ENCODE measurements at regions of chr20 and their contacts with region 1.

Region 1: GRCh38 chr20:330233-331149 is 5.1 kb downstream of the SOX12 start:
- DNase-seq: peak; percentile 65
- H3K4me3 ChIP-seq: no peak overlapping the region
- H3K27ac ChIP-seq: no peak overlapping the region
- H3K4me1 ChIP-seq: peaks cover 16% of the 10 kb centered on the region
- H3K27me3 ChIP-seq: no peaks in the 10 kb centered on the region
- CTCF ChIP-seq: peak; percentile 84 to 97
- POLR2A ChIP-seq: no peak

Region 2: GRCh38 chr20:258963-259362 is 71.5 kb before region 1 on chr20:
- CTCF ChIA-PET with region 1: interaction called, 66 read pairs
- POLR2A ChIA-PET with region 1: no interaction called
- dilution Hi-C with region 1: no loop called
- intact Hi-C with region 1: loop called (anchors 1 kb)
- DNase-seq: peak; percentile 40
- H3K4me3 ChIP-seq: no peak overlapping the region
- H3K27ac ChIP-seq: no peak overlapping the region
- H3K4me1 ChIP-seq: no peaks in the 10 kb centered on the region
- H3K27me3 ChIP-seq: peaks cover 12 to 22% of the 10 kb centered on the region in 2 experiments
- CTCF ChIP-seq: peak; percentile 13 to 35
- POLR2A ChIP-seq: no peak

Region 3: DNA sequence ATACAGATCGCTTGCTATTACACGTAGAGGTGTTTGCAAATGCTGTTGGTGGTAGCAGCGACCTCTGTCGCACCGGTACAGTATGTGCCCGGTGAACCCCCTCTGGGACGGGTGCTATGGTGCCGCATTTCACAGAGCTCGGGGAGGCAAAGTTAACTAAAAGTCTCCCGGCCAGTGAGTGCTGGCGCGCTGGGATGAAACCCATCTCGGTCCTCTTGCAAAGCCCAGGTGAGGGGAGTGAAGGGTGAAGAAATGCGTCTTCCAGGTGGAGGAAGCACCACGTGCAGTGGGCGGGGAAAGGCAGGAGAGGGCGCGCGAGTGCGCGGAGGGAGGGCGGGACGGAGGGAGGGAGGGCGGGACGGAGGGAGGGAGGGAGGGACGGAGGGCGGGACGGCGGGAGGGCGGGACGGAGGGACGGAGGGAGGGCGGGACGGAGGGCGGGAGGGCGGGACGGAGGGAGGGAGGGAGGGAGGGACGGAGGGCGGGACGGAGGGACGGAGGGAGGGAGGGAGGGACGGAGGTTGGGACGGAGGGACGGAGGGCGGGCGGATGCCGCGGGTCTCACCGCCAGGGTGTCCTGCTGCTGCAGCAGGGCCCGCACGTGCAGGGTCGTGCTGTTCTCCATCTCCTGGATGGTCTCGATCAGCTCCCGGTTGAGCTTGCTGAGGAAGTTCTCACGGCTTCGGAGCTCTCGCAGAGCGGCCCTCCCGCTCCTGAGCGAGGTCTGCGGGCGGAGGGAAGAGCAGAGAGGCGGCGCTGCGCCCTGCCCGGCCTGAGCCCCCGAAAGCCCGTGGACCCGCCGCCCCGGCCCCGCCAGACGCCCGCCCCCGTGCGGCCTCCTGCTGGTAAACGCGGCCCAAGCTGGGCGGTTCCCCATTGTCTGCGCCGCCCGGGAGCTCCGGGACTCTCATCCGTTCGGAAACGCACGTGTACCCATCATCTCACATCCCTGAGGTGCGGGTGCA is 51.6 kb before region 1 on chr20:
- CTCF ChIA-PET with region 1: interaction called, 22 read pairs
- POLR2A ChIA-PET with region 1: no interaction called
- dilution Hi-C with region 1: no loop called
- intact Hi-C with region 1: no loop called
- DNase-seq: no peak
- H3K4me3 ChIP-seq: no peak overlapping the region
- H3K27ac ChIP-seq: no peak overlapping the region
- H3K4me1 ChIP-seq: no peaks in the 10 kb centered on the region
- H3K27me3 ChIP-seq: no peaks in the 10 kb centered on the region
- CTCF ChIP-seq: peak in 1 of 2 donors; percentile 7
- POLR2A ChIP-seq: no peak

Region 4: GRCh38 chr20:341682-342081 is 11.2 kb after region 1 on chr20:
- CTCF ChIA-PET with region 1: interaction called, 42 read pairs
- POLR2A ChIA-PET with region 1: interaction called, 4 read pairs
- dilution Hi-C with region 1: no loop called
- intact Hi-C with region 1: no loop called
- DNase-seq: peak; percentile 62
- H3K4me3 ChIP-seq: no peak overlapping the region
- H3K27ac ChIP-seq: no peak overlapping the region
- H3K4me1 ChIP-seq: peaks cover 4% of the 10 kb centered on the region
- H3K27me3 ChIP-seq: no peaks in the 10 kb centered on the region
- CTCF ChIP-seq: no peak
- POLR2A ChIP-seq: no peak

Region 5: DNA sequence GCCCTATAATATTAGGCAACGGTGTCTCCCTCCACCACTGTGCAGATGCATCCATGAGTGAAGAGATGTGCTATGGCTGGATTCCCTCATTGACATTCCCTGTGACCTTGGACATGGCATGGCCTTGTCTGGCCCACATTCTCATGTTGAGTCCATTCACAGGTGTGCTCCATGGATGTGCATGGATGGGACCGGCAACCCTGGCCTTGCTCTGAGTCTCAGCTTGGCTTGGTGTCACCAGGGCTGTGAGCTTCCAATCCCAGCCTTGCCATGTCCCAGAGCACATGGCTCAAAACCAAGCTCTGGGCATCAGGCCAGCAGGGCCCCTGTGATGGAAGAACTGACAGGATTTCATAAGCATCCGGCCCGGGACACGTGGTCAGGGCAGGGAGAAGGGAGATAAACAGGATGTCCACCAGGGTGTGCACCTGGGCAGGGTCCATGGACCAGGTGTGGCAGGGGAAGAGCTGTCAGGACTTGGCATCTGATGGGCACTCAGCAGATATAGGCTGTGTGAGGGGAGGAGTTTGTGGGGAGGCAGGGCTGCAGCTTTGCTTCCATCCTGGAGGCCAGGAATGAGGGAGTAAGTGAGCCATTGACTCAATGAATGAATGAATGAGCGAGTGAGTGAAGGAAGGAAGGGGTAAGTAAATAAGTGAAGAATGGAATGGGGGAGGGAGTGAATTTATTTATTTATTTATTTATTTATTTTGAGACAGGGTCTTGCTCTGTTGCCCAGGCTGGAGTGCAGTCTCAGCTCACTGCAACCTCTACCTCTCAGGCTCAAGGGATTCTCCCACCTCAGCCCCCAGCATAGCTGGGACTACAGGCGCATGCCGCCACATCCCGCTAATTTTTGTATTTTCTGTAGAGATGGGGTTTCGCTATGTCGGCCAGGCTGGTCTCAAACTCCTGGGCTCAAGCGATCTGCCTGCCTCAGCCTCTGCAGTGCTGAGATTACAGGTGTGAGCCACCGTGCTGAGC is 32.1 kb after region 1 on chr20:
- CTCF ChIA-PET with region 1: no interaction called
- POLR2A ChIA-PET with region 1: no interaction called
- dilution Hi-C with region 1: no loop called
- intact Hi-C with region 1: no loop called
- DNase-seq: peak; percentile 89
- H3K4me3 ChIP-seq: no peak overlapping the region
- H3K27ac ChIP-seq: no peak overlapping the region
- H3K4me1 ChIP-seq: peaks cover 7% of the 10 kb centered on the region
- H3K27me3 ChIP-seq: no peaks in the 10 kb centered on the region
- CTCF ChIP-seq: peak in 1 of 2 donors; percentile 39
- POLR2A ChIP-seq: no peak

Measured in endothelial cell of umbilical vein (primary cell).